Naive thymus-derived CD4-positive, alpha-beta T cell (primary cell): ENCODE measurements at regions of chr1 and their contacts with region 1.

Region 1: GRCh38 chr1:155946633-155947219 is 5.3 kb downstream of the RXFP4 start:
- DNase-seq: no peak
- ATAC-seq: no peak
- H3K4me3 ChIP-seq: no peak overlapping the region
- H3K4me3 Mint-ChIP-seq: peak overlapping the region in 9 of 10 donors; percentile 16 to 87 (median 63)
- H3K27ac ChIP-seq: peak overlapping the region; percentile 65
- H3K27ac Mint-ChIP-seq: peak overlapping the region; percentile 81 to 99 (median 89)
- H3K4me1 ChIP-seq: peaks cover 20 to 27% of the 10 kb centered on the region in 2 donors
- H3K4me1 Mint-ChIP-seq: peaks cover 28 to 54% (median 41%) of the 10 kb centered on the region in 7 donors
- H3K27me3 ChIP-seq: no peaks in the 10 kb centered on the region
- H3K27me3 Mint-ChIP-seq: no peaks in the 10 kb centered on the region

Region 2: GRCh38 chr1:155504207-155504606 is 442.5 kb before region 1 on chr1:
- CTCF ChIA-PET with region 1: no interaction called
- POLR2A ChIA-PET with region 1: no interaction called
- intact Hi-C with region 1: no loop called
- DNase-seq: peak in 2 of 9 donors; percentile 5 to 30
- ATAC-seq: peak; percentile 71
- H3K4me3 ChIP-seq: no peak overlapping the region
- H3K4me3 Mint-ChIP-seq: no peak overlapping the region
- H3K27ac ChIP-seq: no peak overlapping the region
- H3K27ac Mint-ChIP-seq: peak overlapping the region in 3 of 9 donors; percentile 10 to 32 (median 14)
- H3K4me1 ChIP-seq: peaks cover 0 to 18% of the 10 kb centered on the region in 2 donors
- H3K4me1 Mint-ChIP-seq: peaks cover 31 to 61% (median 50%) of the 10 kb centered on the region in 7 donors
- H3K27me3 ChIP-seq: no peaks in the 10 kb centered on the region
- H3K27me3 Mint-ChIP-seq: no peaks in the 10 kb centered on the region

Region 3: GRCh38 chr1:155609515-155610256 is 337.0 kb before region 1 on chr1 and contains the start of gene MSTO1:
- CTCF ChIA-PET with region 1: no interaction called
- POLR2A ChIA-PET with region 1: no interaction called
- intact Hi-C with region 1: no loop called
- DNase-seq: peak; percentile 67 to 96 (median 89)
- ATAC-seq: peak; percentile 98
- H3K4me3 ChIP-seq: peak within 1 kb of the TSS; percentile 82
- H3K4me3 Mint-ChIP-seq: peak within 1 kb of the TSS; percentile 86 to 99 (median 96)
- H3K27ac ChIP-seq: peak within 1 kb of the TSS; percentile 76
- H3K27ac Mint-ChIP-seq: peak within 1 kb of the TSS; percentile 83 to 95 (median 95)
- H3K4me1 ChIP-seq: no peaks in the 10 kb centered on the region
- H3K4me1 Mint-ChIP-seq: peaks cover 3 to 10% (median 6%) of the 10 kb centered on the region in 7 donors
- H3K27me3 ChIP-seq: no peaks in the 10 kb centered on the region
- H3K27me3 Mint-ChIP-seq: peaks cover 0 to 2% (median 0%) of the 10 kb centered on the region in 5 donors
- total RNA-seq, gene MSTO1: 54.8 to 129 (median 76.7) TPM

Region 4: GRCh38 chr1:155970531-155971167 is 23.9 kb after region 1 on chr1:
- CTCF ChIA-PET with region 1: interaction called, 3 read pairs
- POLR2A ChIA-PET with region 1: interaction called, 66 read pairs
- intact Hi-C with region 1: no loop called
- DNase-seq: peak in 1 of 9 donors; percentile 14
- ATAC-seq: peak; percentile 89
- H3K4me3 ChIP-seq: no peak overlapping the region
- H3K4me3 Mint-ChIP-seq: peak overlapping the region; percentile 74 to 95 (median 78)
- H3K27ac ChIP-seq: peak overlapping the region; percentile 66
- H3K27ac Mint-ChIP-seq: peak overlapping the region; percentile 83 to 96 (median 95)
- H3K4me1 ChIP-seq: peaks cover 82 to 88% of the 10 kb centered on the region in 2 donors
- H3K4me1 Mint-ChIP-seq: peaks cover 87 to 99% (median 97%) of the 10 kb centered on the region in 7 donors
- H3K27me3 ChIP-seq: no peaks in the 10 kb centered on the region
- H3K27me3 Mint-ChIP-seq: no peaks in the 10 kb centered on the region